PC-3 (cell line): ENCODE measurements at regions of chr12 and their contacts with region 1.

Region 1: DNA sequence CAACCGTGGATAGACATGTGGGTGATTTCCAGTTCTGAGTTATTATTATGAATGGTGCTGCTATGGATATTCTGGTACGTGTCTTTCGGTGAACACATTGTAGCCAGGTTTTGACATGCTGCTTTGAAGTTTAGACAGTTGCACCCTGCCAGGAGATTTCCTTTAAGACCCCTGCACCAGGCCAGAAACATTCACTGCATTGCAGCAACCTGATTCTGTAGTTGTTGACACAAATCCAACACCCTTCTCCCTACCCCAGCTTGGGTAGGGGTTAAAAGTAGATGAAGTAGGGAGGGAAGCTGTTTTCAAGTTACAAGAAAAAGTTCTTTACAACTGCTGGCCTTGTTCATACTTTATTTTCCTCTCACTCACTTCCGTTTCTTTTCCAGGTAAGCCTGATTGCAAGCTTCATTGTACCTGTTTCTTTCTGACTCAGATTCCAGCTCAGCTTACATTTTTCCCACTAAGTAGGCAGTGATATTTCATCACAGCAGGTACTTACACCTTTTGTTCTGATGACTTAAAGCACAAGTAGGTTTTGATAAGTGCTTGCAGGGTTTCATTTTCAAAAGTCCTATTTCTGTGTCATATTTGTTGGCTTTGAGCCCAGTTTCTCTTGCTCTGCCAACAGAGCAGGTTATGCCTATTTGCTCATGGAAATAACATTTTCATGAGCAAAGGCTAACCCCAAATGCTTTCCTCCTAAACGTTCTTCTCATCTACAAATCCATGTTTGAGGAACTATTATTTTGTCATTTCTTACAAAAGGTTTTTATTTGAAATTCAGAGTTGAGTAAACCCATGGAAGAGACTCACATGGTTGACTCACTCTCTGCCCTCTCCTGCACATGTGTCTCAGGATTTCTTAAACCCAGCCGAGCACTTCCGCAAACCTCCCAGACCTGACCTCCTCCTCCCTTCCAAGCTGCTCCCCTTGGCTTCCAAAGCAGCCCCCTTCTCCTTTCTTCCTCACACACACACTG is 12.1 kb upstream of the LTA4H start:
- DNase-seq: peak; percentile 97
- ATAC-seq: peak; percentile 69
- H3K4me3 ChIP-seq: peak overlapping the region; percentile 61
- H3K27ac ChIP-seq: peak overlapping the region; percentile 98
- H3K4me1 ChIP-seq: peaks cover 53% of the 10 kb centered on the region
- H3K27me3 ChIP-seq: no peaks in the 10 kb centered on the region
- CTCF ChIP-seq: no peak

Region 2: DNA sequence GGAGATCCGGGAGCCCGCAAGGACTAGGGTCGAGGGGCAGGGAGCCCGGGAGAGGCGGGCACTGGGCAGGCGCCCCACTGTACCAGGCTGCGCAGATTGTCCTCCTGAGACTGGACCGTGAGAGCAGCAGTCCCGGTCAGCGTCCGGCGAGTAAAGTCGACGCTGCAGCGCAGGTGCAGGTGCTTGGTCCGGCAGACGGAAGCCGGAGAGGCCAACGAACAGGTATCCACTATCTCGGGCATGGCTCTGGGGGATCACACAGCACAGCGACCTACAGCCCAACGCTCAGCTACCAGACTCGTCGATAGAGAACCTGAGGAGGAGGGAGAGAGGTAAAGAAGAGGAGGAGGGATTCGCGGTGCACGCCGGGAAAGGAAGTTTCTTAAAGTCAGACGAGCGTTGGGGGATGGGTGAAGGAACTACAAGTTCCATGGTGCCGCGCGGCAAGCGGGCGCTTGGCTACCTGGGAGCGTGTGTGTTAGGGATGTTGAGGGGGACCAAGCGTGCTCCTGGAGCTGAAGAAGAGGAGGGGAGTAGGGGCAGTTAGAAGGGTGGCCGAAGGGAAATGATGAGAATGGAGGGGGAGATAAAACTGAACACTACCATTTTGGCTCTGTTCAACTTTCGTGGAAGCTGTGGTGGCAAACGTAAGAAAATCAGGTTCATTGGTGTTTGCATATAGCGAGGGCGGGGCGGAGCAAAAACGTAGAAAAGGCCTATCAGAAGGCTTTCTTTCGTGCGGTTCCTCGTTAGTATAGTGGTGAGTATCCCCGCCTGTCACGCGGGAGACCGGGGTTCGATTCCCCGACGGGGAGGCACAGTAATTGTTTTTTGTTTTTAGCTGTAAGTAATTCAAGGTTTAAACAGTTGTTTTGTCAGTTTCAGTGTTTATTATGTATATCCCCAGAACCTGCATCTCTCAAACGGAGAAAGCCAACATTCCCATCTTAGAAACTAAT is 12.0 kb before region 1 on chr12 and contains the start of gene LTA4H:
- CTCF ChIA-PET with region 1: no interaction called
- POLR2A ChIA-PET with region 1: no interaction called
- intact Hi-C with region 1: loop called (anchors 1 kb)
- DNase-seq: peak; percentile 99
- ATAC-seq: peak; percentile 89
- H3K4me3 ChIP-seq: peak within 1 kb of the TSS; percentile 91
- H3K27ac ChIP-seq: 0 out of 2 replicates have a peak within 1 kb of the TSS, but pooled peaks have one; percentile 15
- H3K4me1 ChIP-seq: peaks cover 27% of the 10 kb centered on the region
- H3K27me3 ChIP-seq: no peaks in the 10 kb centered on the region
- CTCF ChIP-seq: no peak
- total RNA-seq, gene LTA4H: 53.5 and 58.4 TPM in 2 replicates

Region 3: DNA sequence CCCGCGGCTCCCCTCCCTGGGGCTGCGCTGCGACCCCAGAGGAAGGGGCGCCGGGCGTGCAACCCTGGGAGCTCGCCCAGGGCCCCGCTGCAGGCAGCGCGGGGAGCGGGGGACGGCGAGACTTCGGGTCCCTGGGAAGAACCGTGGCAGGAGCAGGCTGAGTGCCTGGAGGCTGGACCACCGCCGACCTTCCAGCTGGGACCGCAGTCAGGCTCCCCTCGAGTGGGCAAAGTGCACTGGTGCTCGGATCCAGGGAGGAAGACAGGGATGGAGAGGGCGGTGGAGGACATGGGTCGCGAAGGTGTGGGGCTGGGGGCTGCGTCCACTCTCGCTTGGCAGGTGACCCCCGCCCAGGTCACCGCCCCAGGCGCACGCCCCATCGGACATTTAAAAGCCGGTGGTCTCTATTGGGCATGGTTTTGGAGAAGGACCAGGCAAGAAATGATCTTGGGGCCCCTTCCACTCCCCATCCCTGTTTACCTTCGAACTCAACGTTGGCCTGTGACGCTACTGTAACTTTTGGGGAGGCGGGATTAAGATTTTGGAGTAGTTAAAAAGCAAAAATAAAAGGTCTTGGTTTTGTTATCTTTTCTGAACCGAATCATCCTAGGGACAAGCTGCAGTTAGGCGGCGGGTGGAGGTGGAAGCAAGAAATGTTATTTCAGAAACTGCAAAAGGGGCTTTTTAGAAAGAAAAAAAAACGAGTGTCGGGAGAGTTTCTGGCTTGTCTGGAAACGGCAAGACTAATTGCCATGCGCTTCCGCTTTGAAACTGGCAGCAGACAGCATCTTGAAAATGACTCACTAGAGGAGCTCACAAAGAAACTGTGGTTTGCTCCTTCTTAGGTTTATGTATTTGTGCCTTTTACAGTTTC is 147.7 kb after region 1 on chr12:
- CTCF ChIA-PET with region 1: no interaction called
- POLR2A ChIA-PET with region 1: no interaction called
- intact Hi-C with region 1: loop called (anchors 5 kb)
- DNase-seq: peak; percentile 83
- ATAC-seq: peak; percentile 42
- H3K4me3 ChIP-seq: peak overlapping the region; percentile 96
- H3K27ac ChIP-seq: peak overlapping the region; percentile 98
- H3K4me1 ChIP-seq: peaks cover 37% of the 10 kb centered on the region
- H3K27me3 ChIP-seq: no peaks in the 10 kb centered on the region
- CTCF ChIP-seq: no peak